Activated naive CD4-positive, alpha-beta T cell treated with anti-CD3 and anti-CD28 coated beads for 36 hours (primary cell): ENCODE measurements at regions of chr3 and their contacts with region 1.

Region 1: DNA sequence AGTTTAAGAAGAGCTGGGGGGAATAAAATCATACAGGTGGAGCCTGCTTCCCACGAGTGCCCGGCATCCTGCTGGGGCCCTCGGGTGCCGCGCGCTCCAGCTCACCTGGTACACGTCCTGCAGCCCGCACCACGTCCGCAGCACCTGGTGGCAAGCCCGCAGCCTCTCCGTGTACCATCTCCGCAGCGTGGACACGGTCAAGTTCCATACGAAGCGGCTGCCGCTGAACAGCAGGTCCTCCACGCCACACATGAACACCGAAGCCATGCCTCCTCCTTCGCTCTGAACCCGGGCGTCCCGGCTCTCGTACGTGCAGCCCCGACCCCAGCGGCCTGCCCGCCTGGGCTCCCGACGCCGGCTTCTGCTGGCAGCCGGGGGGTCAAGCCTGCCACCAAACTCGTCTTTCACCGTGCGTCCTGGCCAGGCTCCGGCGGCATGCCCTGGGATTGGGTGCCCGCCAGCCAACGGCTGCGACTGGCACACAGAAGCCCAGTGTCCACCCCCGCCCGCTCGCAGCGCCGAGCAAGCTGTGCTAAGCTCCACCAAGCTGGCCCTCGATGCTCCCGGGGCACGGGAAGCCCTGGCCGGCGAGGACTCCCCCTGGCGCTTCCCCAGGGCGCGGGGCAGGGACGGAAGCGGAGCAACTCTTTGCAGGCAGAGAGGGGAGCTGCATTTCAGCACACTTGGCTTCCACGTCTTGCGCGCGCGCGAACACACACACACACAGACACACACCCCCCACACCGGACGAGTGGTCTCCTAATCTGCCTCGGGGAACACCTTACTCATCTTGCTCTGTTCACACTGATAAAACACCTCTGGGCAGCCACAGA is at the start of gene FRMD4B:
- DNase-seq: peak; percentile 51
- H3K4me3 Mint-ChIP-seq: peak within 1 kb of the TSS; percentile 61
- H3K27ac Mint-ChIP-seq: no peak within 1 kb of the TSS
- H3K4me1 Mint-ChIP-seq: peaks cover 3% of the 10 kb centered on the region
- H3K27me3 Mint-ChIP-seq: peaks cover 55% of the 10 kb centered on the region
- total RNA-seq, gene FRMD4B: 11.9 to 12.1 TPM

Region 2: DNA sequence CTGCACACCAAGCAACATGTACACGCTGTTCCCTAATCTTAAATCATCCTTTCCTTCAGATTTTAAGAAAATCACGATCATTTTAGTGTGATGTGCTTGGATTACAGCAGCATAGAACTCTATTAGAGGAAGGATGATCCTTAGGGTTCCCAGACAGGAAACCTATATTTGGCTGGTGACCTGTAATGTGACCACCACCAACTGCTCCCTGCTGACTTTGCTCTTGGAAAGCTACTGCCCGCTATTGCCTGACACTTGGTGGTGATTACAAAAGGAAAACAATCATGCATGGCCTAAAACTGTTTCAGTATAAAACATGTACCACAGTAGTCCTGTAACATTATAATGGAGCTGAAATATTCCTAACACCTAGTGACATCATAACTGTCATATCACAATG is 236.4 kb before region 1 on chr3:
- CTCF ChIA-PET with region 1: no interaction called
- intact Hi-C with region 1: no loop called
- DNase-seq: no peak
- H3K4me3 Mint-ChIP-seq: no peak overlapping the region
- H3K27ac Mint-ChIP-seq: no peak overlapping the region
- H3K4me1 Mint-ChIP-seq: no peaks in the 10 kb centered on the region
- H3K27me3 Mint-ChIP-seq: peaks cover 2% of the 10 kb centered on the region

Region 3: DNA sequence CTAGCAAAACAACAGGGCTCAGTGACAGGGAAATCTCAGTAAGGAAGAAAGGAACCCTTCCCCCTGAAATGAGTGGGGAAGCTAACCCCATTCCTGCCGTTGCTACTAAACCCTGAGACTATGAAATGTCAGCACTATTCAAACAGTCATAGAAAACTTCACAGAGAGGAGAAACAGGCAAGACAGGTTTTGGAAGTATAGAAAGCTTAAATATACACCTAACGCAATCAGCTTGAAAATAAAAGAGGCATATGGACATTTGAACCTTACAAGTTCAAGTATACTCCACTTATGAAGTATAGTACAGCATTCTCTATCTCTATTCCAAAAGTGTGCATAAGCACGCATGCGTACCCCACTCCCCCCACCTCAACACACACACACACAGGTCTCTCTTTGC is 17.5 kb after region 1 on chr3:
- CTCF ChIA-PET with region 1: interaction called, 11 read pairs
- intact Hi-C with region 1: no loop called
- DNase-seq: no peak
- H3K4me3 Mint-ChIP-seq: no peak overlapping the region
- H3K27ac Mint-ChIP-seq: no peak overlapping the region
- H3K4me1 Mint-ChIP-seq: no peaks in the 10 kb centered on the region
- H3K27me3 Mint-ChIP-seq: no peaks in the 10 kb centered on the region

Region 4: GRCh38 chr3:69451594-69451993 is 65.7 kb after region 1 on chr3:
- CTCF ChIA-PET with region 1: no interaction called
- intact Hi-C with region 1: no loop called
- DNase-seq: no peak
- H3K4me3 Mint-ChIP-seq: no peak overlapping the region
- H3K27ac Mint-ChIP-seq: no peak overlapping the region
- H3K4me1 Mint-ChIP-seq: no peaks in the 10 kb centered on the region
- H3K27me3 Mint-ChIP-seq: peaks cover 5% of the 10 kb centered on the region